HCT116 (cell line): ENCODE measurements at regions of chr16 and their contacts with region 1.

Region 1: DNA sequence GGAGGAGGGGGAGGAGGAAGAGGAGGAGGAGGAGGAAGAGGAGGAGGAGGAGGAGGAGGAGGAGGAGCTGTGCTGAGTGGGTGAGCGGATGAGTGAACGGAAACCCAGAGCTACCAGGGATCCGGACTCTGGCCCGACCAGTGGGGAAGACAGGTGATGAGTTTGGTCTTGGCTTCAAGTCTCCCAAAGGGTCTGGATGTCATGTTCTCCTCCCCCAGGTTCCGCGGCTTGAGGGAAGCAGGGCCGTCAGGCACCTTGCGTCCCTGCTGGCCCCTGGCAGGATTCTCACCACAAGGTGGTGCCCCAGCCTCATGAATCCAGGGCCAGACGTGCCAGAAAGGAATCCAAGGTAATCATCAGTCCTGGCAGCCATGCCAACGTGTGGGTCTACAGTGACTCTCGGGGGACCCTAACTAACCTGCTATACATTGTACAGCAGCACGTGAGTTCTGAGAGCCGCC is 13.5 kb upstream of the ABAT start:
- DNase-seq: peak; percentile 62
- ATAC-seq: peak; percentile 96
- H3K4me3 ChIP-seq: no peak overlapping the region
- H3K27ac ChIP-seq: no peak overlapping the region
- H3K4me1 ChIP-seq: no peaks in the 10 kb centered on the region
- H3K27me3 ChIP-seq: no peaks in the 10 kb centered on the region
- CTCF ChIP-seq: peak; percentile 62 to 81 (median 74)
- POLR2A ChIP-seq: no peak
- RAD21 ChIP-seq: peak; percentile 86

Region 2: GRCh38 chr16:8729779-8730334 is 69.0 kb after region 1 on chr16:
- CTCF ChIA-PET with region 1: no interaction called
- POLR2A ChIA-PET with region 1: no interaction called
- RAD21 ChIA-PET with region 1: no interaction called
- intact Hi-C with region 1: no loop called
- DNase-seq: no peak
- ATAC-seq: no peak; the same call in 1 of the 2 replicates
- H3K4me3 ChIP-seq: no peak overlapping the region
- H3K27ac ChIP-seq: no peak overlapping the region
- H3K4me1 ChIP-seq: no peaks in the 10 kb centered on the region
- H3K27me3 ChIP-seq: no peaks in the 10 kb centered on the region
- CTCF ChIP-seq: no peak
- POLR2A ChIP-seq: no peak
- RAD21 ChIP-seq: no peak

Region 3: GRCh38 chr16:8797364-8798173 is 136.7 kb after region 1 on chr16 and contains the starts of genes PMM2 and TMEM186:
- CTCF ChIA-PET with region 1: no interaction called
- POLR2A ChIA-PET with region 1: no interaction called
- RAD21 ChIA-PET with region 1: no interaction called
- intact Hi-C with region 1: loop called (anchors 1 kb)
- DNase-seq: peak; percentile 88
- ATAC-seq: peak; percentile 96
- H3K4me3 ChIP-seq: peak within 1 kb of the TSS; percentile 87 to 97
- H3K27ac ChIP-seq: peak within 1 kb of the TSS; percentile 74
- H3K4me1 ChIP-seq: peaks cover 12 to 24% of the 10 kb centered on the region in 2 experiments
- H3K27me3 ChIP-seq: no peaks in the 10 kb centered on the region
- CTCF ChIP-seq: no peak
- POLR2A ChIP-seq: no peak
- RAD21 ChIP-seq: no peak
- total RNA-seq, gene PMM2: 53.3 TPM
- total RNA-seq, gene TMEM186: 14.0 TPM

Region 4: DNA sequence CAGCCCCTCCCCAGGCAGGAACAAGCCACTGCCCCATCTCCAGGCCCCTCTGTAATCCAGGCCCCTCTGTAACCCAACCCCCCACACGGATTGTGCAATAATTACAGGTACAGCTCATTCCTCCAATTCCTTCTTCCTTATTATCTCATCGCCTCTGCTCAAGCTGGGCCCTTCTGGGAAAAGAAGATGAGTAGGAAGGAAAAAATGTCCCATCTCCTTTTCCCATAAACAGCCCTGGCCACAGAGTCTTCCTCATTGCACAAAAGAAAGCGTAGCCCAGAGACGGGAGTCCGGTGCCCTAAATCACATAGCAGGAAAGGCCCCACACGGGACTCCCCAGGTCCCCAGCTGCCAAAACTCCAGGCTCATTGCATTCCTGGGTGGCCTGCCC is 217.6 kb after region 1 on chr16:
- CTCF ChIA-PET with region 1: interaction called, 17 read pairs
- POLR2A ChIA-PET with region 1: no interaction called
- RAD21 ChIA-PET with region 1: interaction called in 1 of 2 experiments, 4 read pairs
- intact Hi-C with region 1: loop called (anchors 1 kb)
- DNase-seq: no peak
- ATAC-seq: peak; percentile 24; the same call in 1 of the 2 replicates
- H3K4me3 ChIP-seq: no peak overlapping the region
- H3K27ac ChIP-seq: 0 out of 2 replicates have a peak overlapping the region, but pooled peaks have one; percentile 21
- H3K4me1 ChIP-seq: peaks cover 8 to 22% of the 10 kb centered on the region in 2 experiments
- H3K27me3 ChIP-seq: no peaks in the 10 kb centered on the region
- CTCF ChIP-seq: no peak
- POLR2A ChIP-seq: no peak
- RAD21 ChIP-seq: no peak